Activated CD8-positive, alpha-beta T cell treated with anti-CD3 and anti-CD28 coated beads, Interleukin-2, amount 10 ng/mL, durations not matched to agents 7 days and 5 days (primary cell): ENCODE measurements at regions of chr15 and their contacts with region 1.

Region 1: GRCh38 chr15:94324117-94324826 is 92.9 kb downstream of the MCTP2 start:
- DNase-seq: peak; percentile 75
- ATAC-seq: peak; percentile 78
- H3K4me3 Mint-ChIP-seq: no peak overlapping the region
- H3K27ac Mint-ChIP-seq: no peak overlapping the region
- H3K4me1 Mint-ChIP-seq: peaks cover 28% of the 10 kb centered on the region
- H3K27me3 Mint-ChIP-seq: no peaks in the 10 kb centered on the region

Region 2: DNA sequence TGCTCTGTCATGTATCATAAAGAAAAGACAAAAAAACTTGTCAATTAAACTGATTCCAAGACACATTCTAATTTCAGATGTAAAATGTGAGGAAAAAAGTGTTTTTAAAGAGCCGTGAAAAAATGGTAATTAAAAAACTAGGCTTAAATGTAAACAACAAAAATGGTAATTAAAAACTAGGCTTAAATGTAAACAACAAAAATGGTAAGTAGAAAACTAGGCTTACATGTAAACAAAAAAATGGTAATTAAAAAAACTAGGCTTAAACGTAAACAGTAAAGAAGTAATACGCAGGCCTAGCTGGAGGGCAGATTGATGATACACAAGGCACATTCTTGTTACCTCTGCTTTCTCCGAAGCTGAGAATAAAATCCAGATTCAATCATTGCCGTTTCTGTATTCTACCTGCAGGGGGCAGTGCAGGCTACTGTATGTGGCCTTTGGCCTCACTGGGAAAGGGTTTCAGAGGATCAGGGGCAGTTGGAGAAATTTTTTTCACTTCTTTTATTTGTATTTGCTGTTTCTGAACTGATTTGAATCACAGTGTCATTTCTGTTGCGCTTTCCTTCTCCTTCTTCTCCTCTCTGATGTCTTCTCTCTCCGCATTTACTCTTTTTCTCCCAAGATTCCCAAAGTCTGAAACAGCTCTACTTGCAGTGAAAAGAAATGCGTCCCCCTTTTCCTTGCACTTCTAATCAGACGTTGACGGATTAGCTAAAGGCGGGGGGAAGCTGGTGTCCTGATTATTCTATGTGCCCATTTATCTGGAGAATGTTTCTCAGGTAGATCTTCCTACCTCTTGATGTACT is 160.1 kb before region 1 on chr15:
- CTCF ChIA-PET with region 1: interaction called, 298 read pairs
- POLR2A ChIA-PET with region 1: interaction called, 4 read pairs
- DNase-seq: peak; percentile 77
- ATAC-seq: no peak
- H3K4me3 Mint-ChIP-seq: no peak overlapping the region
- H3K27ac Mint-ChIP-seq: no peak overlapping the region
- H3K4me1 Mint-ChIP-seq: peaks cover 7% of the 10 kb centered on the region
- H3K27me3 Mint-ChIP-seq: peaks cover 18% of the 10 kb centered on the region

Region 3: GRCh38 chr15:94225616-94226015 is 98.7 kb before region 1 on chr15:
- CTCF ChIA-PET with region 1: interaction called, 108 read pairs
- POLR2A ChIA-PET with region 1: interaction called, 11 read pairs
- DNase-seq: no peak
- ATAC-seq: no peak
- H3K4me3 Mint-ChIP-seq: no peak overlapping the region
- H3K27ac Mint-ChIP-seq: no peak overlapping the region
- H3K4me1 Mint-ChIP-seq: peaks cover 31% of the 10 kb centered on the region
- H3K27me3 Mint-ChIP-seq: peaks cover 18% of the 10 kb centered on the region

Region 4: GRCh38 chr15:94238539-94239118 is 85.6 kb before region 1 on chr15:
- CTCF ChIA-PET with region 1: interaction called, 108 read pairs
- POLR2A ChIA-PET with region 1: no interaction called
- DNase-seq: no peak
- ATAC-seq: no peak
- H3K4me3 Mint-ChIP-seq: no peak overlapping the region
- H3K27ac Mint-ChIP-seq: peak overlapping the region; percentile 58
- H3K4me1 Mint-ChIP-seq: peaks cover 70% of the 10 kb centered on the region
- H3K27me3 Mint-ChIP-seq: no peaks in the 10 kb centered on the region

Region 5: GRCh38 chr15:94306700-94307650 is 17.3 kb before region 1 on chr15:
- CTCF ChIA-PET with region 1: interaction called, 54 read pairs
- POLR2A ChIA-PET with region 1: interaction called, 3 read pairs
- DNase-seq: peak; percentile 51
- ATAC-seq: peak; percentile 38
- H3K4me3 Mint-ChIP-seq: peak overlapping the region; percentile 37
- H3K27ac Mint-ChIP-seq: peak overlapping the region; percentile 88
- H3K4me1 Mint-ChIP-seq: peaks cover 66% of the 10 kb centered on the region
- H3K27me3 Mint-ChIP-seq: no peaks in the 10 kb centered on the region